ENCODE measurements at regions of chr6 and their contacts with region 1.

Region 1: DNA sequence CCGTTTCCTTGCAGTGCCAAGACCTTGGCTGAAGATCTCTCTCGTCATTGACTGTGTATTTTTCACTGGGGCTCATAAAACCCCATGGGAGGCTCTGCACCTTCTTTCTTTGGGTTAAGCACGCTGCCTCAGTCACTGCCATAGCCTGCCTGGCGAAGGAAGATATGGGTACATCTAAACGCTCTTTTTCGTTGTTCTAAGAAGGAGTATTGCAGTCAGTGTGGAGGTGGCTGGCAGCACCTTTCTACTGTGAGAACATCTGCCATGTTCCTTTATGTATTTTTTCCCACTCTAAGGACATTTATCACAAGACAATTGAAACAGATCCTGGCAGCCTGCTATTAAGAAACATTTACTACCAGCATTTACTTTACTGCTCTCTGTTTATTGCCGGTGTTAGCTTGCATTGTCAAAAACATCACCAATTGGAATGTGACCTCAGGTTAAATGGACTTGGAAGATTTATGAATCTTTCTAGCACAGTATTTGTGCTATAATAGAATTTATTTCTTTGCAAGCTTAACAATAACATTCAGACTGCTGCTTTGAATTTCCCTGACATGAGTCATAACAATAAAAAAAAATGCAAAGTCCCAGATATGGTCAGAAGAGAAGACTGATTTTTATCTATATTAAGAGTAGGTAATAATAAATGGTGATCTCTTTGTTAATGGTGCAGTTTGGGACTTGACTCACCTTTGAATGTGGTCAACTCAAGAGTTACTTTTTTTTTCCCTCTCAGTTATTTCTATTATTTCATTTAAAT is 62.2 kb upstream of the CLDN20 start:
- DNase-seq: no peak
- ATAC-seq: peak; percentile 61
- H3K4me3 ChIP-seq: no peak overlapping the region
- H3K27ac ChIP-seq: no peak overlapping the region
- H3K4me1 ChIP-seq: peaks cover 14% of the 10 kb centered on the region
- H3K27me3 ChIP-seq: no peaks in the 10 kb centered on the region
- CTCF ChIP-seq: no peak
- EP300 ChIP-seq: no peak
- POLR2A ChIP-seq: no peak
- RAD21 ChIP-seq: no peak

Region 2: DNA sequence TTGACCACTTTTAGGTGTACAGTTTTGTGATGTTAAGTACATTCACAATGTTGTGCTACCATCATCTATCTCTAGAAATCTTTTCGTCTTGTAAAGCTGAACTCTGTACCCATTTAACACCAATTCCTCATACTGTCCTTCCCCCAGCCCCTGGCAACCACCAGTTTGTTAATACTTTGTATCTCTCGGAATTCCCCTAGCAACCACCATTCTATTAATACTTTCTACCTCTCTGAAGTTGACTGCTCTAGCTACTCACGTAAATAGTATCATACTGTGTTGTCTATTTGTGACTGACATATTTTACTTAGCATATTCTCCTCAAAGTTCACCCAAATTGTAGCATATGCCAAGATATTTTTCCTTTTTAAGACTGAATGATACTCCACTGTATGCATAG is 20.1 kb before region 1 on chr6:
- CTCF ChIA-PET with region 1: interaction called, 8 read pairs
- POLR2A ChIA-PET with region 1: interaction called, 4 read pairs
- RAD21 ChIA-PET with region 1: interaction called, 4 read pairs
- SMC1A ChIA-PET with region 1: interaction called, 19 read pairs
- in situ Hi-C with region 1: no loop called
- intact Hi-C with region 1: loop called (anchors 2 kb)
- DNase-seq: no peak
- ATAC-seq: peak; percentile 60
- H3K4me3 ChIP-seq: 0 out of 2 replicates have a peak overlapping the region, but pooled peaks have one; percentile 16
- H3K27ac ChIP-seq: peak overlapping the region; percentile 81
- H3K4me1 ChIP-seq: peaks cover 22% of the 10 kb centered on the region
- H3K27me3 ChIP-seq: no peaks in the 10 kb centered on the region
- CTCF ChIP-seq: no peak
- EP300 ChIP-seq: peak; percentile 66 to 88
- POLR2A ChIP-seq: no peak
- RAD21 ChIP-seq: no peak

Region 3: GRCh38 chr6:155188707-155189496 is 12.7 kb before region 1 on chr6:
- CTCF ChIA-PET with region 1: interaction called, 7 read pairs
- POLR2A ChIA-PET with region 1: interaction called, 5 read pairs
- RAD21 ChIA-PET with region 1: interaction called, 4 read pairs
- SMC1A ChIA-PET with region 1: interaction called, 19 read pairs
- in situ Hi-C with region 1: no loop called
- intact Hi-C with region 1: loop called (anchors 2 kb)
- DNase-seq: no peak
- ATAC-seq: peak; percentile 11; the same call in 1 of the 3 replicates
- H3K4me3 ChIP-seq: peak overlapping the region; percentile 0; the same call in 1 of the 2 replicates
- H3K27ac ChIP-seq: no peak overlapping the region
- H3K4me1 ChIP-seq: peaks cover 4% of the 10 kb centered on the region; the same call in 1 of the 2 replicates
- H3K27me3 ChIP-seq: no peaks in the 10 kb centered on the region
- CTCF ChIP-seq: no peak
- EP300 ChIP-seq: no peak
- POLR2A ChIP-seq: no peak
- RAD21 ChIP-seq: no peak

Measured in GM12878 (cell line).